KBM-7 (cell line): ENCODE measurements at regions of chr6 and their contacts with region 1.

Region 1: GRCh38 chr6:6591778-6592465 is 3.4 kb downstream of the LY86 start:
- DNase-seq: peak; percentile 99

Region 2: DNA sequence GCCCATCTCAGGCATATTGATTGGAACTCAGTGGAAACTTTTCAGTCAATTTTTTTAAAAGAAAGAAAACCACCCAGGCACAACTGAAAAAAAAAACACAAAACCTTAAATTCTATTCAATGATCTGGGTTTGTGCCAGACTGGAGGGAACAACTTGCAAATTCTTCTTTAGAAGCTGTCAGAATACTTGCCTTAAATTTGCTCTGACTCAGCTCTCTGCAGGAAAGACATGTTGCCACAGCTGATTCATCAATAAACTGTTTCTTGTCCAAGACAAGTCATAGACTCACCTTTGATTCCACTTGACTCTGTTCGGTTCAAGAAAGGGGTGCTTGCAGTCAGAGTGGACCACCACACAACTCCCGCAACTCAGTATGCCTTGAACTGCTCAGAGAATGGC is 153.6 kb before region 1 on chr6:
- in situ Hi-C with region 1: no loop called
- DNase-seq: no peak

Region 3: DNA sequence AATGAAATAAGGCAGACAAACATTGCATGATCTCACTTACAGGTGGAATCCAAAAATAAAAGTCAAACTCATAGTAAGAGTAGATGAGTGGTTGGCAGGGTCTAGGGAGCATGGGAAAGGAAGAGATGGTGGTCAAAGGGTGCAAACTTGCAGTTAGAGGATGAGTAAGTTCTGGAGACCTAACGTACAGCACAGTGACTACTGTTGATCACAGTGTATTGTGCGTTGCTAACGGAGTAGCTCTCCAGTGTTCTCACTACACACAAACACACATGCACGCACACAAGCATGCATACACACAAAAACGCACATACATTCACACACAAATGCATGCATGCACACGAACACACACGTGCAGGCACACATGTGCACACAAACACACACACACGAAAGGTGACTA is 51.5 kb after region 1 on chr6:
- in situ Hi-C with region 1: loop called (anchors 10 kb)
- DNase-seq: no peak